Activated B cell treated with CpG ODN at 0.5 μM for 24 hours (primary cell): ENCODE measurements at regions of chr20 and their contacts with region 1.

Region 1: DNA sequence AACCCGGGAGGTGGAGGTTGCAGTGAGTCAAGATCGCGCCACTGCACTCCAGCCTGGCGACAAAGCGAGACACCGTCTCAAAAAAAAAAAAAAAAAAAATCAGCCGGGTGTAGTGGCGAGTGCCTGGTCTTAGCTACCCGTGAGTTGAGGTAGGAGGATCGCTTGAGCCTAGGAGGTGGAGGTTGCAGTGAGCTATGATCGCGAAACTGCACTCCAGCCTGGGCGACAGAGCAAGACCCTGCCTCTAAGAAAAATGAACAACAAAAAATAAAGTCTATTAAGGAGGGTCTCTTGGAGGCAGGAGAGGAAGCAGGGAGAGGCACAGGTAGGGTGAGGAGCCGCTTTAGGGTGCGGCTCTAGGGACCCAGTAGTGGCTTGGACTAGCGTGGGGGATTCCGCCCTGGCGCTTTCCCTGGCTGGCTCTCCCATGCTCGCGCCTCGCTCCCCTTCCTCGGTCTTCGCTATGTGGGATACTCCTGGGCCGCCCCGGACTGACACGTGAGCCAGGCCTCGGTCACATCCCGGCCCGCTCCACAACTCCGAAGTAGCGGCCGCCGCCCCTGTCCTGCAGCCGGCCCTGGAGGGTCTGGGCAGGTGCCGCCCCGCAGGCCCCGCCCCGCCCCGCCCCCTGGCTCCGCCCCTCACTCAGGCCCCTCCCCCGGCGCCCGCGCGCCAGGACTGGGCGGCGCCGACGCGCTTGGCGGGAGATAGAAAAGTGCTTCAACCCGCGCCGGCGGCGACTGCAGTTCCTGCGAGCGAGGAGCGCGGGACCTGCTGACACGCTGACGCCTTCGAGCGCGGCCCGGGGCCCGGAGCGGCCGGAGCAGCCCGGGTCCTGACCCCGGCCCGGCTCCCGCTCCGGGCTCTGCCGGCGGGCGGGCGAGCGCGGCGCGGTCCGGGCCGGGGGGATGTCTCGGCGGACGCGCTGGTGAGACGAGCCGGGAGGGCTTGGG is at the start of gene MYBL2:
- DNase-seq: peak; percentile 77
- ATAC-seq: peak; percentile 78
- H3K4me3 Mint-ChIP-seq: peak within 1 kb of the TSS; percentile 89
- H3K27ac Mint-ChIP-seq: peak within 1 kb of the TSS; percentile 92
- H3K4me1 Mint-ChIP-seq: peaks cover 54% of the 10 kb centered on the region
- H3K27me3 Mint-ChIP-seq: no peaks in the 10 kb centered on the region
- CTCF ChIP-seq: no peak
- total RNA-seq, gene MYBL2: 99.5 and 102 TPM in 2 replicates

Region 2: GRCh38 chr20:43456809-43457639 is 209.6 kb before region 1 on chr20:
- CTCF ChIA-PET with region 1: no interaction called
- POLR2A ChIA-PET with region 1: interaction called, 8 read pairs
- intact Hi-C with region 1: loop called (anchors 1 kb)
- DNase-seq: no peak
- ATAC-seq: peak; percentile 83
- H3K4me3 Mint-ChIP-seq: peak overlapping the region; percentile 95
- H3K27ac Mint-ChIP-seq: peak overlapping the region; percentile 98
- H3K4me1 Mint-ChIP-seq: peaks cover 31% of the 10 kb centered on the region
- H3K27me3 Mint-ChIP-seq: peaks cover 5% of the 10 kb centered on the region
- CTCF ChIP-seq: no peak

Region 3: GRCh38 chr20:43514062-43514999 is 152.3 kb before region 1 on chr20:
- CTCF ChIA-PET with region 1: no interaction called
- POLR2A ChIA-PET with region 1: no interaction called
- intact Hi-C with region 1: loop called (anchors 1 kb)
- DNase-seq: peak; percentile 83
- ATAC-seq: peak; percentile 89
- H3K4me3 Mint-ChIP-seq: peak overlapping the region; percentile 93
- H3K27ac Mint-ChIP-seq: peak overlapping the region; percentile 88
- H3K4me1 Mint-ChIP-seq: peaks cover 22% of the 10 kb centered on the region
- H3K27me3 Mint-ChIP-seq: peaks cover 11% of the 10 kb centered on the region
- CTCF ChIP-seq: no peak

Region 4: GRCh38 chr20:43590392-43591323 is 76.0 kb before region 1 on chr20 and contains the start of gene IFT52:
- CTCF ChIA-PET with region 1: no interaction called
- POLR2A ChIA-PET with region 1: interaction called, 20 read pairs
- intact Hi-C with region 1: loop called (anchors 1 kb)
- DNase-seq: peak; percentile 83
- ATAC-seq: peak; percentile 97
- H3K4me3 Mint-ChIP-seq: peak within 1 kb of the TSS; percentile 94
- H3K27ac Mint-ChIP-seq: peak within 1 kb of the TSS; percentile 95
- H3K4me1 Mint-ChIP-seq: peaks cover 17% of the 10 kb centered on the region
- H3K27me3 Mint-ChIP-seq: peaks cover 2% of the 10 kb centered on the region
- CTCF ChIP-seq: no peak
- total RNA-seq, gene IFT52: 18.7 and 20.8 TPM in 2 replicates

Region 5: GRCh38 chr20:43631598-43631997 is 35.1 kb before region 1 on chr20:
- CTCF ChIA-PET with region 1: no interaction called
- POLR2A ChIA-PET with region 1: interaction called, 10 read pairs
- intact Hi-C with region 1: no loop called
- DNase-seq: no peak
- ATAC-seq: no peak
- H3K4me3 Mint-ChIP-seq: no peak overlapping the region
- H3K27ac Mint-ChIP-seq: no peak overlapping the region
- H3K4me1 Mint-ChIP-seq: no peaks in the 10 kb centered on the region
- H3K27me3 Mint-ChIP-seq: no peaks in the 10 kb centered on the region
- CTCF ChIP-seq: no peak

Region 6: DNA sequence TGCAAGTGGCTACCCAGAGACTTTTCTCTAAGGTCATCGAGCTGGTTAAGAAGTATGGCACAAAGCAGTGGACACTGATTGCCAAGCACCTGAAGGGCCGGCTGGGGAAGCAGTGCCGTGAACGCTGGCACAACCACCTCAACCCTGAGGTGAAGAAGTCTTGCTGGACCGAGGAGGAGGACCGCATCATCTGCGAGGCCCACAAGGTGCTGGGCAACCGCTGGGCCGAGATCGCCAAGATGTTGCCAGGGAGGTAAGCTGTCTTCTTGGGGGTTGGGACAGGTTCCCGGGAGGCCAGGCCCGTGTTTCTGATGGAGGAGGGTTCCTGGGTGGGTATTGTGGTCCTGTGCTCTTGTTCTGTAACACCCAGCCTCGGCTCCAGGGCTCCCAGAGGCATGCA is 20.2 kb after region 1 on chr20:
- CTCF ChIA-PET with region 1: interaction called, 9 read pairs
- POLR2A ChIA-PET with region 1: interaction called, 287 read pairs
- intact Hi-C with region 1: loop called (anchors 1 kb)
- DNase-seq: no peak
- ATAC-seq: no peak
- H3K4me3 Mint-ChIP-seq: no peak overlapping the region
- H3K27ac Mint-ChIP-seq: peak overlapping the region; percentile 41
- H3K4me1 Mint-ChIP-seq: peaks cover 33% of the 10 kb centered on the region
- H3K27me3 Mint-ChIP-seq: no peaks in the 10 kb centered on the region
- CTCF ChIP-seq: no peak

Region 7: DNA sequence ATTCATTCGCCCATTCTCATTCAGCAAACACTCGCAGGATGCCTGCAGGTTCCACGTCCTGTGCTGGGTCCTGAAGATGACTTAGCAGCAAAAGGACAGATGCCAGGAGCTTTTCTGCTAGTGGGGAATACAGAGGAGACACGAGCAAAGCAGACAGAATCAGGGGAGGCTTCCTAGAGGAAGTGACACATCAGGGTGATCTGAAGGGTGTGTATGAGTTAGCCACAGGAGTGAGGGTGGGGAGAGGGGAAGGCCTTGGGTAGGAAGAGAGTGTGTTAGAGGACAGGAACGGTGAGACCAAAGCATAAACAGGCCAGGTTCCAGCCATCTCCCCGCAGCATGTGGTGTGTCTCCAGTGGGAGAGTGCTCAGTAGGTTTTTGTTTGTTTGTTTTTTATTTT is 133.5 kb after region 1 on chr20:
- CTCF ChIA-PET with region 1: no interaction called
- POLR2A ChIA-PET with region 1: no interaction called
- intact Hi-C with region 1: no loop called
- DNase-seq: no peak
- ATAC-seq: no peak
- H3K4me3 Mint-ChIP-seq: no peak overlapping the region
- H3K27ac Mint-ChIP-seq: no peak overlapping the region
- H3K4me1 Mint-ChIP-seq: peaks cover 5% of the 10 kb centered on the region
- H3K27me3 Mint-ChIP-seq: peaks cover 5% of the 10 kb centered on the region
- CTCF ChIP-seq: no peak